Activated T-helper 2 cell treated with anti-CD3 and anti-CD28 coated beads, Interferon-gamma antibody, Interleukin-2, Interleukin-4, amounts not matched to agents 10 μg/mL and 5 μg/mL and 100 μg/mL, durations not matched to agents 14 hours and 24 hours and 36 hours (primary cell): ENCODE measurements at regions of chr1 and their contacts with region 1.

Region 1: DNA sequence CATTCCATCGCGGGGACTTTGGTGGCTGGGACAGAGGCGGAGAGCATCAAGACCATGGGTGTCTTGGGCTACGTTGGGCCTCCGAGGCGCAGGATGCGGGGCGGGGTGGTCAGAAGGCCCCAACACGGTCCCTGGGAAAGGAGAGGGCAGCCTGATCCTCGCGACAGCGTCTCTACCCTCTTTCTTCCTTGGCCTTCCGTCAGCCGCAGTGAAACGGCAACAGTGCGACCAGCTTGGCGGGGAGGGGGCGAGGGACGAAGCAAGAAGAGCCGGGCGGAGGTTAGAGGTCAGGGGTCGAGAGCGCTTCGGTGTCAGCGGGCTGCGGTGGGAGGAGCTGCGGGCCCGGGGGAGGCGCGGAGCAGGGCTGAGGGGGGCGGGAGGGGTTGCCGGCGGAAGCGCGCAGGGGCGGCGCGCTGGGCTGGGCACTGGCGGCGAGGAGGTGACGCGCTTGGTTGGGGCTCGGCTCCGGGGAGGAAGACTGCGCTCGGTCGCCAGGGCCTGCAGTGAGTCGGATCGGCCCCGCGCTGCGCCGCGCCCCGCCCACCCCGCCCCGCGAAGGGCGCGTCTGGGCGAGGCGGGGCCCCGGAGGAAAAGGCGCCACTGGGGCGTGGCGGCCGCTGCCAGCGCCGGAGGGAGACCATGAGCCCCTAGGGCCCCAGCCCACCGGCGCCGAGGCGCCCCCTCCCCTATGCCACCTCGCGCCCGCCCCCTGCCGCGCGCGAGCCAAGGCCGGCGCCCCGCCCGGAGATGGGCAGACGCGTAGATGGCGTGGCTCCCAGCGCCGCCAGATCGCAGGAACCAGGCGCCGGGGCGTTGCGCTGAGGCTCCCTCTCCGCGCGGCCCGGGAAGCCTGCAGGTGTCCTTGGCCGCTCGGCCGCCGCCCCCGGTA is at the start of gene KCNC4:
- DNase-seq: peak; percentile 90
- H3K4me3 Mint-ChIP-seq: peak within 1 kb of the TSS; percentile 88
- H3K27ac Mint-ChIP-seq: peak within 1 kb of the TSS; percentile 94
- H3K4me1 Mint-ChIP-seq: peaks cover 45% of the 10 kb centered on the region
- H3K27me3 Mint-ChIP-seq: no peaks in the 10 kb centered on the region
- total RNA-seq, gene KCNC4: 30.6 and 31.1 TPM in 2 replicates

Region 2: GRCh38 chr1:110229348-110230001 is 19.5 kb after region 1 on chr1:
- intact Hi-C with region 1: no loop called
- DNase-seq: no peak
- H3K4me3 Mint-ChIP-seq: no peak overlapping the region
- H3K27ac Mint-ChIP-seq: no peak overlapping the region
- H3K4me1 Mint-ChIP-seq: peaks cover 1% of the 10 kb centered on the region
- H3K27me3 Mint-ChIP-seq: no peaks in the 10 kb centered on the region

Region 3: DNA sequence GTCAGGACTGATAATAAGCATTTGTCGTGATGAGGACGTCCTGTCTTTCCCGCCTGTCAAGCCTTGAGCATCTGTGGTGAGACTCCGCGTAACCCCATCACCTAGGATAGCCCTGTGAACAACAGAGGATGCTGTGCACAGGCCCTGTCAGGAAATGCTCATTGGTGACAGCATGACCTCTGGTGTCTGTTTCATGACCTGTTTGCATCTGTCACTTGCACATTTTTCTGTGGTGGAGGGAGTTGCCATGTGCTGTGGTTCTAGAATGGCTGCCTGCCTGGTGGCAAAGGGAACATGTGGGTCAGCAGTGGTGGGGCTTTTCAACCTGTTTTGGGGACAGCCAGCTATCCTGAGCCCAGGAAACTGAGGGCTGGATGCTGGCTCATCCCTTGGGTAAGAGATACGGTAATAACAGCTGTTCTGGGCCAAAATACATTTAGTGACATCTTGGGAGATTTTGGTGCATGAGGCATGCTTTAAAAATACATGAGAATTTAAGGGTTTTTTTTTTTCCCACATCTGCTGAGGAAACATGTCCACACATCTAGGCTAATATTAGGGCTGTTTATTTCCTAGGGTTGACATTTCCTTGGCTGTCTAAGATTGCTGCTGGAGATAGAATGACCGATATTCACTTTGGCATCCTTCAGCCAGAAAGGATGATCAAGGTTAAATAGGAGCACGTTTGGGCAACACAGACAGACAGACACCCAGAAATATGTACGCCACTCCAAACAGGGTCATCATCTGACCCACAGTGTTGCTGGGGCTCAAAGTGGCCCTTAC is 53.1 kb after region 1 on chr1:
- intact Hi-C with region 1: loop called (anchors 2 kb)
- DNase-seq: no peak
- H3K4me3 Mint-ChIP-seq: no peak overlapping the region
- H3K27ac Mint-ChIP-seq: no peak overlapping the region
- H3K4me1 Mint-ChIP-seq: peaks cover 6% of the 10 kb centered on the region
- H3K27me3 Mint-ChIP-seq: peaks cover 4% of the 10 kb centered on the region

Region 4: DNA sequence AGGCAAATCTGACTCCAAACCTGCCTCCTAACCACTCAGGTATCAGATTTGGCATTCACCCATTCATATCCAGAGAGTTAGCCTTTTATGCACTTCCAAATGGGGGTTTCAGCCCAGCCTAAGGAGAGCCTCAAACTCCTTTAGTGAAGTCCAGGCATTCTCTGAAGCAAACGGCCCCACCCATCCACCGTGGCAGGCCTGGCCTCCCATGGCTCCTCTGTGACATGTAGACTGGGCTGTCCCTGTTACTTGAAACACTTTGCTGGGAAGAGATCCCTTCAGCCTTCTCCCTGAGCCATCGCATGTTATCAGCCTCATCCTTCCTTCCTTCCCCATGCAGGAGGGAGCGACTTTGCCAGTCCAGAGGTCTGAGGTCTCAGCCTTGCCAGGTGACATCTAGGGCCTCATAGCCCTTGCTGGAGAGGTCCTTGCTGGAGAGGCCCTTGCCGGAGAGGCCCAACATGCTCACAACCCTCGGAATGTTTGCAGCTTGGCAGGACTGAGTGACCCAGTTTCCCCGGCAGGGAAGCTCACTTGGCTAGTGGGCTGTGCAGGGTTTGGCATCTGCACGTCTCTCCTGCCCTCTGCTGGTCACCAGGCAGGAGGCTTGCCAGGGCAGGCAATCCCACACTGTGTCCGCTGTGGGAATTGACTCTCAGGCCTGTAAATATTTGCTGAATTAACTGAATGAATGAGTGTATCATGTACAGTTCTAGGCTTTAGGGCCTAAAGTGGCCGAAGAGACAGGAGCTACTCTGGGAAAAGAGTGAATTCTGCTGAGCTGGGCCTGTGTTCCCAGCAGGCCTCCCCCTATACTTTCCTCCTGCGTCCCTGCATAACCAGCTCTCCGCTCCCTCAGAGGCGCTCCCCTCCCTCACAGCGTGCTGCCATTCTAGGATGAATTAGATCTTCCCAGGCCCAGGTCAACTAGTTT is 102.5 kb after region 1 on chr1:
- intact Hi-C with region 1: loop called (anchors 1 kb)
- DNase-seq: peak; percentile 50
- H3K4me3 Mint-ChIP-seq: no peak overlapping the region
- H3K27ac Mint-ChIP-seq: no peak overlapping the region
- H3K4me1 Mint-ChIP-seq: no peaks in the 10 kb centered on the region
- H3K27me3 Mint-ChIP-seq: no peaks in the 10 kb centered on the region

Region 5: DNA sequence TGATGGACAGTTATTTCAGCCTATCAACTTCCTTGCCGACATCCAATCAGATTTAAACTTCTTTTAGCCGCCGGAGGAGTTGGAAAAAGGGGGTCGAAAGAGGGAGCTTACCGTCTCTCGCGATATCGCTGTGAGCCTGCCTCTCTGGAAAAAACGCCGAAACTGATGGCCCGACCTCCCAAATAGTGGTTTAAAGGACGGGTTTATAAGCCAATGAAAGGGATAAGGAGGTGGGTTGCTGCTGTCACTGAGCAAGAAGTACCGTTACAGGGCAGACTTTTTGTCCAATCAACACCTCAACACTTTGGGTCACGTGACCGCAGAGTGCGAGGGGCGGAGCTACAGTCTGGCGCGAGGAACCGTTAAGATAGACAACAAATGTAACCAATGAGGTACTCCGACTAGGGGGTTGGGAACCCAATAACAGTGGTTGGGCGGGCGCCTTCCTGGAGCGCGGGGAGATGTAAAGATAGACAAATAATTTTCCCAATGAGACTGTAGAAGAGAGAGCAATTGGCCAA is 129.0 kb after region 1 on chr1 and contains the start of gene RBM15:
- intact Hi-C with region 1: loop called (anchors 1 kb)
- DNase-seq: peak; percentile 98
- H3K4me3 Mint-ChIP-seq: no peak within 1 kb of the TSS
- H3K27ac Mint-ChIP-seq: no peak within 1 kb of the TSS
- H3K4me1 Mint-ChIP-seq: peaks cover 52% of the 10 kb centered on the region
- H3K27me3 Mint-ChIP-seq: no peaks in the 10 kb centered on the region
- total RNA-seq, gene RBM15: 55.5 TPM in 2 replicates

Region 6: GRCh38 chr1:110407260-110408210 is 197.6 kb after region 1 on chr1 and contains the start of gene LAMTOR5:
- intact Hi-C with region 1: loop called (anchors 1 kb)
- DNase-seq: peak; percentile 90
- H3K4me3 Mint-ChIP-seq: peak within 1 kb of the TSS; percentile 96
- H3K27ac Mint-ChIP-seq: peak within 1 kb of the TSS; percentile 97
- H3K4me1 Mint-ChIP-seq: peaks cover 16% of the 10 kb centered on the region
- H3K27me3 Mint-ChIP-seq: no peaks in the 10 kb centered on the region
- total RNA-seq, gene LAMTOR5: 170 and 171 TPM in 2 replicates